ENCODE measurements at regions of chr14 and their contacts with region 1.

Region 1: DNA sequence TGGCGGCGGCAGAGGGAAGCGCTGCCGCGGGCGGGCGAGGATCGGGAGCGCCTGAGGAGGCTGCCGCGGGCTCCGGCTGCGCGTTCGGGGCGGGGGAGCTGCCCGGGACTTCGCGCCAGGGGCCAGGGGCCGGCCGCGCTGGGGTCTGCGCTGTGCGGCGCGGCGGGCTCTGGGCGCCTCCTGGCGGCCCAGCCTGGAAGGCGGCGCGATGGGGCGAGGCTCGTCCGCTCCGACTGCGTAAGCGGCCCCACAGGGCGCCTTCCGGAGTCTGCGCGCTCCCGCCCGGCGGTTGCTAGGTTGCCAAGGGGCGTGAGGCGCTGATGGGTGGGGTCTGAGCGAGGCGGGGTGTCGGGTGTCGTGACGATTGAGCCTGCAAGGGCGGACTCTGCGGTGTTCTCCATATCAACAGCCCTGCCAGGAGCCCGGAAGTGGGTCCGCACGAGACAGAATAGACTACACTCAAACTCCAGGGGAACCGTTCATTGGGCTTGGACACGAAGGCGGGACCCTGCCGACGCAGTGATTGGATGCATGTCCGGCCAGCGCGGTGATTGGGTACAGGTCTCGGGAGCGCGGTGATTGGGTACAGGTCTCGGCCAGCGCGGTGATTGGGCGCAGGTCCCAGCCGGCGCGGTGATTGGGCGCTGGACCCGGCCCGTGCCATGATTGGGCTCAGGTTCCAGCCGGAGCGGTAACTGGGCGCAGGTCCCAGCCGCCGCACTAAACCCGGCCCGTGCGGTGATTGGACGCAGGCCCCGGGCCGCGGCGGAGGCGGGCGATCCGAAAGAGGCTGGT is at the start of gene TEDC1:
- DNase-seq: peak; percentile 96 to 100 (median 100)
- ATAC-seq: peak; percentile 75
- H3K4me3 ChIP-seq: peak within 1 kb of the TSS; percentile 85
- H3K4me3 Mint-ChIP-seq: peak within 1 kb of the TSS; percentile 79 to 95 (median 86)
- H3K27ac ChIP-seq: peak within 1 kb of the TSS; percentile 100
- H3K27ac Mint-ChIP-seq: peak within 1 kb of the TSS; percentile 84 to 99 (median 96)
- H3K4me1 ChIP-seq: peaks cover 16 to 24% of the 10 kb centered on the region in 2 donors
- H3K4me1 Mint-ChIP-seq: peaks cover 5 to 24% (median 19%) of the 10 kb centered on the region in 7 donors
- H3K27me3 ChIP-seq: no peaks in the 10 kb centered on the region
- H3K27me3 Mint-ChIP-seq: no peaks in the 10 kb centered on the region
- total RNA-seq, gene TEDC1: 19.7 to 294 (median 31.3) TPM

Region 2: GRCh38 chr14:105020815-105021655 is 469.7 kb before region 1 on chr14 and contains the start of gene CDCA4:
- CTCF ChIA-PET with region 1: interaction called, 3 read pairs
- POLR2A ChIA-PET with region 1: interaction called, 3 read pairs
- intact Hi-C with region 1: loop called (anchors 1 to 2 kb)
- DNase-seq: peak; percentile 93 to 98 (median 97)
- ATAC-seq: peak; percentile 91
- H3K4me3 ChIP-seq: peak within 1 kb of the TSS; percentile 97
- H3K4me3 Mint-ChIP-seq: peak within 1 kb of the TSS; percentile 88 to 99 (median 92)
- H3K27ac ChIP-seq: peak within 1 kb of the TSS; percentile 94
- H3K27ac Mint-ChIP-seq: peak within 1 kb of the TSS; percentile 81 to 97 (median 92)
- H3K4me1 ChIP-seq: peaks cover 25 to 54% of the 10 kb centered on the region in 2 donors
- H3K4me1 Mint-ChIP-seq: peaks cover 38 to 62% (median 41%) of the 10 kb centered on the region in 7 donors
- H3K27me3 ChIP-seq: no peaks in the 10 kb centered on the region
- H3K27me3 Mint-ChIP-seq: no peaks in the 10 kb centered on the region
- total RNA-seq, gene CDCA4: 12.7 to 47.8 (median 14.0) TPM

Region 3: DNA sequence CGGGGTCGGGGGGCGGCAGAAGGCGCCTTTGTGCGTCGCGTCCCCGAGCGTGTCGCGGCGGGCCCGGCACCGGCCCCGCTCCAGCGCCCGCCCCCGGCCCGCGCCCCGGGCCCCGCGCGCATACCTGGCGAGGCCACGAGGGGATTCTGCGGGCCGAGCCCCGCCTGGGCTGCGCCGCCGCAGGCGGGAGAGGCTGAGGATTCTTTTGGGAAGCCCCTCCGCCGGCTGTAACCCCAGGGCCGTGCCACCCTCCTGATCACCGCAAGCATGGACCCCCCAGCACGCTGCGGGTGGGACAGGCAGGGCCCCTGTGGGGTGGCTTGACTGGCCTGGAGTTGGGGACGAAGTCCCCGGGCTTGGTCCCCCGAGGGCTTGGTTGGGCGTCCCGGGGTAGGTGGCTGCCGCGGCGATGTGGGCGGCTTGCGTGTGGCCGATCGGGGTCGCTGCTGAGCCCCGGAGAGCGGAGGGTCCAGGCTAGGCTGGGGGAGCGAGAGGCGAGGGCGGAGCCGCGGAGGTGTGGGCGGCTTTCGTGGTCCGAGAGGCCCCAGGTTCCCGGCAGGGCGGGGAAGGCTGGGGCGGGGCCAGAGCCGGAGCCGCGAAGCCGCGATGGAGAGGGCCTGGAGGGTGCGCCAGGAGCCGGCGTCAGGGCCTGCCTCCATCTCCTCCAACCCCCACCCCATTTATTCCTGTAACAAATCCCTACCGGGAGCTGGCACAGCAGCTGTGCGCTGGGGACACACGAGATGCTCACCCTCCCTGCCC is 397.2 kb before region 1 on chr14:
- CTCF ChIA-PET with region 1: no interaction called
- POLR2A ChIA-PET with region 1: no interaction called
- intact Hi-C with region 1: loop called (anchors 1 to 10 kb)
- DNase-seq: peak in 7 of 9 donors; percentile 23 to 84 (median 31)
- ATAC-seq: peak; percentile 47
- H3K4me3 ChIP-seq: peak overlapping the region; percentile 67
- H3K4me3 Mint-ChIP-seq: peak overlapping the region; percentile 46 to 84 (median 72)
- H3K27ac ChIP-seq: peak overlapping the region; percentile 87
- H3K27ac Mint-ChIP-seq: peak overlapping the region in 6 of 9 donors; percentile 41 to 72 (median 60)
- H3K4me1 ChIP-seq: peaks cover 14 to 15% of the 10 kb centered on the region in 2 donors
- H3K4me1 Mint-ChIP-seq: peaks cover 5 to 22% (median 16%) of the 10 kb centered on the region in 7 donors
- H3K27me3 ChIP-seq: no peaks in the 10 kb centered on the region
- H3K27me3 Mint-ChIP-seq: peaks cover 0 to 4% (median 0%) of the 10 kb centered on the region in 5 donors

Region 4: GRCh38 chr14:105368965-105369652 is 121.7 kb before region 1 on chr14:
- CTCF ChIA-PET with region 1: interaction called, 56 read pairs
- POLR2A ChIA-PET with region 1: interaction called, 19 read pairs
- intact Hi-C with region 1: loop called in 1 of 2 experiments (anchors 1 kb)
- DNase-seq: no peak
- ATAC-seq: no peak
- H3K4me3 ChIP-seq: no peak overlapping the region
- H3K4me3 Mint-ChIP-seq: no peak overlapping the region
- H3K27ac ChIP-seq: no peak overlapping the region
- H3K27ac Mint-ChIP-seq: no peak overlapping the region
- H3K4me1 ChIP-seq: peaks cover 7 to 9% of the 10 kb centered on the region in 2 donors
- H3K4me1 Mint-ChIP-seq: peaks cover 2 to 9% (median 5%) of the 10 kb centered on the region in 7 donors
- H3K27me3 ChIP-seq: no peaks in the 10 kb centered on the region
- H3K27me3 Mint-ChIP-seq: no peaks in the 10 kb centered on the region

Region 5: DNA sequence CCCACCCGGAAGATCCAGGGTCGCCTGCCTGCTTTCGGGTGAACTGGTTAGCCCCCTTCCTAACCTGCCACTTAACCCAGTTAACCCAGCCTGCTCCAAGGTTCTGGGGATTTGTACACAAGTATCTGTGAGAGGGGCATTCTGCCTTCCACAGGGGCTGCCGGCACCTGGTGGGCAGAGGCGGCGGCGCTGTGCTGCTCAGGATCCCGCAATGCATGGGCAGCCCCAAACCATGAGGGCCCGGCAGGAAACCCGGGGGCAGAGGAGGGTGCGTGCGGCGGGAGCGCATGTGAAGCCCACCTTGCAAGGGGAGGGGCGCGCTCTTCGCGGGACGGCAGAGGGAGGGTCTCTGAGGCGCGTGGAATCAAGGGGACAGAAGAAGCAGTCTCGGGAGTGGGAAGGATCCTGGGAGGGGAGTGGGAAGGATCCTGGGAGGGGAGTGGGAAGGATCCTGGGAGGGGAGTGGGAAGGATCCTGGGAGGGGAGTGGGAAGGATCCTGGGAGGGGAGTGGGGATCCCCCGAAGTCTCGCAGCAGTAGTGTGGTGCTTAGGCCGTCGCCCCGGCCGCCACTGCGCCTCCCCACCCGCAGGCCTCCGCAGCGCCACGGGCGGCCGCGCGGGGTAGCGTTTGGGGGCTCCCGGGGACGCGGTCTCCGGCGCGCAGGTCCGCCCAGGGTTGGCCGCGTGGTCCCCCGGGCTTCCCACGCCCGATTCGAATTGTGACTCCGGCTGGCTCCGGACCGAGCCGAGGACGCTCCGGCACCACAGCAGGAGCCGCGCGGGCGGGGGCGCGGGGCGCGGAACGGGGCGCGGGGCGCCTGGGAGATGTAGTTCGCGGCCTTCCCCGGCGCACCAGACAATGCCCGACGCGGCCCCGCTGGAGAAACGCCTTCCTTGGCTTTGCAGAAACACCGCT is 76.1 kb before region 1 on chr14:
- CTCF ChIA-PET with region 1: interaction called, 4 read pairs
- POLR2A ChIA-PET with region 1: no interaction called
- intact Hi-C with region 1: loop called (anchors 1 to 2 kb)
- DNase-seq: peak; percentile 47 to 82 (median 66)
- ATAC-seq: peak; percentile 85
- H3K4me3 ChIP-seq: peak overlapping the region; percentile 61
- H3K4me3 Mint-ChIP-seq: peak overlapping the region; percentile 66 to 88 (median 76)
- H3K27ac ChIP-seq: peak overlapping the region; percentile 58
- H3K27ac Mint-ChIP-seq: peak overlapping the region in 4 of 9 donors; percentile 52 to 86 (median 78)
- H3K4me1 ChIP-seq: peaks cover 9 to 15% of the 10 kb centered on the region in 2 donors
- H3K4me1 Mint-ChIP-seq: peaks cover 6 to 25% (median 16%) of the 10 kb centered on the region in 7 donors
- H3K27me3 ChIP-seq: peaks cover 0 to 12% of the 10 kb centered on the region in 2 donors
- H3K27me3 Mint-ChIP-seq: peaks cover 0 to 31% (median 6%) of the 10 kb centered on the region in 5 donors

Region 6: GRCh38 chr14:105473677-105474482 is 16.9 kb before region 1 on chr14:
- CTCF ChIA-PET with region 1: interaction called, 94 read pairs
- POLR2A ChIA-PET with region 1: interaction called, 7 read pairs
- intact Hi-C with region 1: loop called (anchors 2 kb)
- DNase-seq: peak in 7 of 9 donors; percentile 55 to 83 (median 61)
- ATAC-seq: peak; percentile 71
- H3K4me3 ChIP-seq: peak overlapping the region; percentile 26
- H3K4me3 Mint-ChIP-seq: peak overlapping the region; percentile 64 to 83 (median 75)
- H3K27ac ChIP-seq: peak overlapping the region; percentile 45
- H3K27ac Mint-ChIP-seq: peak overlapping the region in 2 of 9 donors; percentile 19 to 23
- H3K4me1 ChIP-seq: peaks cover 7 to 34% of the 10 kb centered on the region in 2 donors
- H3K4me1 Mint-ChIP-seq: peaks cover 5 to 12% (median 7%) of the 10 kb centered on the region in 7 donors
- H3K27me3 ChIP-seq: no peaks in the 10 kb centered on the region
- H3K27me3 Mint-ChIP-seq: peaks cover 0 to 24% (median 0%) of the 10 kb centered on the region in 5 donors